ENCODE measurements at regions of chr3 and their contacts with region 1.

Region 1: DNA sequence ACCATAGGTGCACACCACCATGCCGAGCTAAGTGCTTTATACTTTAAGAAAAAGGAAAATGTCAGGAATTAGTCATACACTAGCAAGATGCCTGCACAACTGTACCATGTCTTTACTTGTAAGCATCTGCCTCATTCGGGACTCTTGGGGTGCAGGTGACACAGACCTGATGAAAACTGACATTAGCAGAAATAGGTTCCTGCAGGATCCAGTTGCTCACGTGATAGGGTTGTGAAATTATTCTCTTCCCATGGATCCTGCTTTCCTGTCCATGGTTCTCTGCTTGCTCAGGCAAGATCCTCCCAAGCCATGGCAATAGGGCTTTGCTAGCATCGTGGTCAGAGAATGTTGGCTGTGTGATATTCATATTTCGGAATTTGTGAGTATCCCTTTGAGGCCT is 10.2 kb upstream of the LHFPL4 start:
- DNase-seq: no peak
- ATAC-seq: no peak
- H3K4me3 ChIP-seq: no peak overlapping the region
- H3K27ac ChIP-seq: no peak overlapping the region
- H3K4me1 ChIP-seq: no peaks in the 10 kb centered on the region
- H3K27me3 ChIP-seq: no peaks in the 10 kb centered on the region
- CTCF ChIP-seq: no peak
- POLR2A ChIP-seq: no peak

Region 2: GRCh38 chr3:9512456-9513045 is 51.3 kb before region 1 on chr3:
- intact Hi-C with region 1: loop called in 1 of 10 experiments (anchors 2 kb)
- DNase-seq: no peak
- ATAC-seq: no peak
- H3K4me3 ChIP-seq: no peak overlapping the region
- H3K27ac ChIP-seq: no peak overlapping the region
- H3K4me1 ChIP-seq: no peaks in the 10 kb centered on the region
- H3K27me3 ChIP-seq: peaks cover 0 to 36% (median 17%) of the 10 kb centered on the region in 9 donors
- CTCF ChIP-seq: no peak
- POLR2A ChIP-seq: no peak

Region 3: GRCh38 chr3:9994086-9994844 is 430.4 kb after region 1 on chr3:
- intact Hi-C with region 1: no loop called
- DNase-seq: no peak
- ATAC-seq: no peak
- H3K4me3 ChIP-seq: no peak overlapping the region
- H3K27ac ChIP-seq: no peak overlapping the region
- H3K4me1 ChIP-seq: no peaks in the 10 kb centered on the region
- H3K27me3 ChIP-seq: no peaks in the 10 kb centered on the region
- CTCF ChIP-seq: no peak
- POLR2A ChIP-seq: no peak